Common myeloid progenitor, CD34-positive (primary cell): ENCODE measurements at regions of chr14 and their contacts with region 1.

Region 1: DNA sequence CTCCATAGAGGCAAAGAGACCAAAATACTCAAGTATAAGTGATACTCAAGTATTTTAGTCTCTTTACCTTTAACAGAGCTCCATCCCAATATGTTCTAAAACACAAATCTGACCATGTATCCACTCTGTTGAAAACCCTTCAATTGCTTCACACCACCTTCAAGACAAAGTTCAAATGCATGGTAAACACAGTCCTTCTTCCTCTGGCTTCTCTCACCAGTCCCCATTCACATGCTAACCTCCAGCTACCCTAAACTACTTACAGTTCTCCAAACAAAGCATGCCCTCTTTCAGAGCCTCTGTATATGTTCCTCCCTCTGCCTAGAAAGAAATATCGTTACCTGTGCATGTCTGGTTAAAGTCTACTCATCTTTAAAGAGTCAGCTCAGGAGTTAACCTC is 100.2 kb downstream of the NUMB start:
- DNase-seq: no peak
- H3K4me3 ChIP-seq: no peak overlapping the region
- H3K27ac ChIP-seq: no peak overlapping the region
- H3K4me1 ChIP-seq: no peaks in the 10 kb centered on the region
- H3K27me3 ChIP-seq: no peaks in the 10 kb centered on the region

Region 2: DNA sequence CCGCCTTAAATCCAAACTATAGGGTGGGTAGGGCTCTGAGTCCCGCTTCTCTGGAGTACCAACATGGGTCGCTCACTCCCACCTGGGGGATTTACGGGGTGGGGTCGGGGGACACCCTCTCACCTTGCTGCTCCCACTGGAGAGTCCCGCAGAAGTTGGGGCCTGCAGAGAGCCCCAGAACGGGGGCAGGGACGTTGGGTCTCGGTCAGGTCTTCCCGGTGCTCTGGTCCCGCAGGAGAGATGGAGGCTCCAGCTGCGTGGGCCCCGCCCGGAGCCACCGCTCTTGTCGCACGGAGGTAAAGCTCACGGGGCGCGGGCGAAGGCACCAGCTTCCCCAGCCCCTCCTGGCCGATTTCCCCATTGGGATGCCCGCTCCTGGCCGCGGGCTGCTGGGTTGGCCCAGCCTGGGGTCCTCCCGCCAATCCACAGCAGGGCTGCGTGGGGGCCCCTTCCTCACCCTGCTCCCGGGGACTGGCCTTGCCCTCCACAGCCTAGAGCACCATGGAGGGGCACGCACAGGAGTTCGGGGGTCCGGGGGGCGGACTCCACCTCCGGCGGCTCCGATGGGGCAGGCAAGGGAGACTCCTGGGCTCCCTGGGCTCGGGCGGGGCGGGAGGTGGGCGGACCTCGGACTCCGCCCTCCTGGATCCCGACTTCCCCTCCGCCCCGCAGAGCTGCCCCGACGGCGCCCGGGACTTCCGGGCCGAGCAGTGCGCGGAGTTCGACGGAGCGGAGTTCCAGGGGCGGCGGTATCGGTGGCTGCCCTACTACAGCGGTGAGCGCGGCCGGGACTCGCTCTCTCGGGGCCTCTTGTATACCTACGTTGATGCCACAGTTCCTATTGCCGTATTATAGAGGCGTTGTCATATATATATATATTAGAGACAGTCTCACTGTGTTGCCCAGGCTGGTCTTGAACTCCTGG is 112.5 kb before region 1 on chr14:
- CTCF ChIA-PET with region 1: no interaction called
- POLR2A ChIA-PET with region 1: no interaction called
- DNase-seq: peak; percentile 40 to 77 (median 63)
- H3K4me3 ChIP-seq: peak overlapping the region; percentile 23 to 79 (median 62)
- H3K27ac ChIP-seq: no peak overlapping the region
- H3K4me1 ChIP-seq: peaks cover 2 to 59% (median 48%) of the 10 kb centered on the region in 4 experiments
- H3K27me3 ChIP-seq: peaks cover 0 to 16% (median 8%) of the 10 kb centered on the region in 5 experiments

Region 3: GRCh38 chr14:73261520-73262426 is 96.4 kb before region 1 on chr14:
- CTCF ChIA-PET with region 1: no interaction called
- POLR2A ChIA-PET with region 1: no interaction called
- DNase-seq: no peak
- H3K4me3 ChIP-seq: no peak overlapping the region
- H3K27ac ChIP-seq: no peak overlapping the region
- H3K4me1 ChIP-seq: no peaks in the 10 kb centered on the region
- H3K27me3 ChIP-seq: no peaks in the 10 kb centered on the region

Region 4: GRCh38 chr14:73295198-73295796 is 62.9 kb before region 1 on chr14:
- CTCF ChIA-PET with region 1: no interaction called
- POLR2A ChIA-PET with region 1: no interaction called
- DNase-seq: peak; percentile 58 to 78 (median 67)
- H3K4me3 ChIP-seq: no peak overlapping the region
- H3K27ac ChIP-seq: no peak overlapping the region
- H3K4me1 ChIP-seq: no peaks in the 10 kb centered on the region
- H3K27me3 ChIP-seq: no peaks in the 10 kb centered on the region

Region 5: DNA sequence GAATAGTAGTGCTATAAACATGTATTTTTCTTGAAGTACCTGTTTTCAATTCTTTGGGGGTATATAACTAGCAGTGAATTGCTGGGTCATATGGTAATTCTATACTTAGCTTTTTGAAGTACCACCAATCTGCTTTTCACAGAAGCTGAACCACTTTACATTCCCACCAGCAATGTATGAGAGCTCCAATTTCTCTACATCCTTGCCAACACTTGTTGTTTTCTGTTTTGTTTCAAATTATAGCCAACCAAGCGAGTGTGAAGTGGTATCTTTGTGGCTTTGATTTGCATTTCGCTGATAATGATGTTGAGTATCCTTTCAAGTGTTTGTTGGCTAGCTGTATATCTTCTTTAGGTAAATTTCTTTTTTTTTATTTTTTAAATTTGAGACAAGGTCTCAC is 25.2 kb before region 1 on chr14:
- CTCF ChIA-PET with region 1: no interaction called
- POLR2A ChIA-PET with region 1: no interaction called
- DNase-seq: no peak
- H3K4me3 ChIP-seq: no peak overlapping the region
- H3K27ac ChIP-seq: no peak overlapping the region
- H3K4me1 ChIP-seq: no peaks in the 10 kb centered on the region
- H3K27me3 ChIP-seq: no peaks in the 10 kb centered on the region

Region 6: DNA sequence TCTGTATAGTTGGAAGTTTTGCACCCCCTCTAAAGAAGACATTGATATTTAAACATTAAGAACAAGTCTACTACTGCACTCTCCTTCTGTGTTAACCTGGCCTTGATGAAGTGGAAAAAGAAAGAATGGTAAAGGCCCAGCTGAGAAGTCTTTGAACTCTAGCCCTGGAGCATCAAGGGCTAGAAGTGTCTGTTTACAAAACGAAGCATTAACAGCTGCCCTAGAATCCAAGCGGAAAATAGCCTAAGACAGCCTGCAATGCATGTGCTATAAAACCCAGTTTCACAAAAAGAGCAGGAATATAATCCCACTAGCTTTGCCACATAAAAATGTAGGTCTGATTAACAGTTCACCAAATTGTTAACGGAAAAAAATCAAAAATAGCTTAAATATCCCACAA is 39.6 kb after region 1 on chr14:
- CTCF ChIA-PET with region 1: no interaction called
- POLR2A ChIA-PET with region 1: interaction called, 10 read pairs
- DNase-seq: no peak
- H3K4me3 ChIP-seq: no peak overlapping the region
- H3K27ac ChIP-seq: no peak overlapping the region
- H3K4me1 ChIP-seq: no peaks in the 10 kb centered on the region
- H3K27me3 ChIP-seq: no peaks in the 10 kb centered on the region